Activated CD4-positive, alpha-beta T cell treated with anti-CD3 and anti-CD28 coated beads for 36 hours (primary cell): ENCODE measurements at regions of chr9 and their contacts with region 1.

Region 1: GRCh38 chr9:8895861-8896224 is 1096.3 kb upstream of the DMAC1 start:
- DNase-seq: no peak
- ATAC-seq: no peak
- H3K4me3 Mint-ChIP-seq: no peak overlapping the region
- H3K27ac Mint-ChIP-seq: no peak overlapping the region
- H3K4me1 Mint-ChIP-seq: no peaks in the 10 kb centered on the region
- H3K27me3 Mint-ChIP-seq: peaks cover 2% of the 10 kb centered on the region

Region 2: DNA sequence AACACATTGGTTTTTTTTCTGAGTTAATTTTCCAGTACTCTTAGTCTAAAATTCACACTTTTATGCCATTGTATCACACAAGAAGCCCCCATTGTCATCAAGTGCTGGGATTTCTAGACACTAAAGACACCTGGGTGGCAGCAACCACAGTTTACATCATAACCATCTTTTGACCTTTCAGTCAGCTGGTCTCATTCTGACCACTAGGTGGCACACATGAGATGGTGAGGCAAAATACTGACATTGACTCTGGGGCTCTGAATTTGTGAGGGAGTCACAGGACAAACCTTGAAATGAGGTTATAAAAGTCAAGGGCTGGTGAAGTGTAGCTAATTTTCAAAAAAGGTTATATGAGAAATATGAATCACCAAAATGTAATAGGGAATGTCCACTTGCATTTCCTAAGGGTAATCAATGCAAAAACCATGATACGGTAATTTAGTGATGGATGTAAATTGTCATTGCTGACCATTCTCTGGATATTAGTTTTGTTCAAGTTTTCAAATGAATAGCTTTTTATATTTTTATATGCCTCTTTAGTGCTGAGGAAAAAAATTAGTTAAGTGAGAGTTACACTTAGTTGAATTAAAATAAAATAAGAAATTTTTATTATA is 1325.6 kb before region 1 on chr9:
- CTCF ChIA-PET with region 1: interaction called, 4 read pairs
- POLR2A ChIA-PET with region 1: no interaction called
- intact Hi-C with region 1: loop called in 1 of 2 experiments (anchors 2 kb)
- DNase-seq: peak; percentile 77
- ATAC-seq: peak; percentile 70
- H3K4me3 Mint-ChIP-seq: no peak overlapping the region
- H3K27ac Mint-ChIP-seq: no peak overlapping the region
- H3K4me1 Mint-ChIP-seq: peaks cover 4% of the 10 kb centered on the region
- H3K27me3 Mint-ChIP-seq: peaks cover 5% of the 10 kb centered on the region

Region 3: GRCh38 chr9:7844242-7844641 is 1051.6 kb before region 1 on chr9:
- CTCF ChIA-PET with region 1: no interaction called
- POLR2A ChIA-PET with region 1: no interaction called
- intact Hi-C with region 1: loop called in 1 of 2 experiments (anchors 10 kb)
- DNase-seq: no peak
- ATAC-seq: peak; percentile 42
- H3K4me3 Mint-ChIP-seq: no peak overlapping the region
- H3K27ac Mint-ChIP-seq: no peak overlapping the region
- H3K4me1 Mint-ChIP-seq: no peaks in the 10 kb centered on the region
- H3K27me3 Mint-ChIP-seq: no peaks in the 10 kb centered on the region

Region 4: GRCh38 chr9:8254541-8254940 is 641.3 kb before region 1 on chr9:
- CTCF ChIA-PET with region 1: no interaction called
- POLR2A ChIA-PET with region 1: no interaction called
- intact Hi-C with region 1: no loop called
- DNase-seq: no peak
- ATAC-seq: no peak
- H3K4me3 Mint-ChIP-seq: no peak overlapping the region
- H3K27ac Mint-ChIP-seq: no peak overlapping the region
- H3K4me1 Mint-ChIP-seq: no peaks in the 10 kb centered on the region
- H3K27me3 Mint-ChIP-seq: no peaks in the 10 kb centered on the region

Region 5: GRCh38 chr9:8412327-8412726 is 483.5 kb before region 1 on chr9:
- CTCF ChIA-PET with region 1: interaction called, 3 read pairs
- POLR2A ChIA-PET with region 1: no interaction called
- intact Hi-C with region 1: loop called in 1 of 2 experiments (anchors 5 kb)
- DNase-seq: no peak
- ATAC-seq: no peak
- H3K4me3 Mint-ChIP-seq: no peak overlapping the region
- H3K27ac Mint-ChIP-seq: no peak overlapping the region
- H3K4me1 Mint-ChIP-seq: peaks cover 10% of the 10 kb centered on the region
- H3K27me3 Mint-ChIP-seq: peaks cover 2% of the 10 kb centered on the region